ENCODE measurements at regions of chr12 and their contacts with region 1.

Region 1: DNA sequence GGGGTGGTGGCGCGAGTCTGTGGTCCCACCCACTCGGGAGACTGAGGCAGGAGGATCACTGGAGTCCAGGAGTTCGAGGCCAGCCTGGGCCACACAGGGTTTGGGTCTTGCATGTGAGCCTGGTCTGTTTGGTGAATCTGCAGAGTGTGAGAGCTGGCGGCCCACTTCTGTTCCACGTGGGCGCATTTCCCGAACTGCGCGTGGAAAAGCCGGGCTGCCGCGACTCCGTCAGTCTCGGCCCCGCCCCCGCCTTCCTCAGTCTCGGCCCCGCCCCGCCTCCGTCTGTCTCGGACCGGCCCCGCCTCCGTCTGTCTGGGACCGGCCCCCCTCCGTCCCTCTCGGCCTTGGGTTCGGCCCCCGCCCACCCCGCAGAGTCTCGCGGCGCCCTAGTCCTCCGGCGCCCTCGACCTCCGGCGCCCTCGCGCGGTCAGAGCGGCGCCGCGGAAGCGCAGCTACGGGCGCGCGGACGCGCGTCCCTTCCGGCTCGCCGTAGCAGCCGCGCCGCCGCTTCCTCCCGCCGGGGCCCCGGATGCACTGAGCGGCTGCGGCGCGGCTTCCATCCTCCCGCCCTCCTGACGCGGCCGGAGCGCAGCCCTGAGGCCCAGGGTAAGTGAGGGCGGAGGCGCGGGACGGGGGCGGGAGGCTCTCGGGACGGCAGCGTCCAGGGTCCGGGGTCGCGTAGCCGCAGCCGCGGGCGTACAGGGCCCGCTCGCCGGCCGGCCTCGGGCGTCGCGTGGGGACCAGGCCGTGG is at the start of gene EP400:
- DNase-seq: peak; percentile 93
- H3K4me3 ChIP-seq: peak within 1 kb of the TSS; percentile 82 to 87 (median 85)
- H3K27ac ChIP-seq: peak within 1 kb of the TSS; percentile 64
- H3K4me1 ChIP-seq: peaks cover 7% of the 10 kb centered on the region
- H3K27me3 ChIP-seq: no peaks in the 10 kb centered on the region
- CTCF ChIP-seq: peak; percentile 35 to 53
- total RNA-seq, gene EP400: 15.5 to 48.0 TPM

Region 2: DNA sequence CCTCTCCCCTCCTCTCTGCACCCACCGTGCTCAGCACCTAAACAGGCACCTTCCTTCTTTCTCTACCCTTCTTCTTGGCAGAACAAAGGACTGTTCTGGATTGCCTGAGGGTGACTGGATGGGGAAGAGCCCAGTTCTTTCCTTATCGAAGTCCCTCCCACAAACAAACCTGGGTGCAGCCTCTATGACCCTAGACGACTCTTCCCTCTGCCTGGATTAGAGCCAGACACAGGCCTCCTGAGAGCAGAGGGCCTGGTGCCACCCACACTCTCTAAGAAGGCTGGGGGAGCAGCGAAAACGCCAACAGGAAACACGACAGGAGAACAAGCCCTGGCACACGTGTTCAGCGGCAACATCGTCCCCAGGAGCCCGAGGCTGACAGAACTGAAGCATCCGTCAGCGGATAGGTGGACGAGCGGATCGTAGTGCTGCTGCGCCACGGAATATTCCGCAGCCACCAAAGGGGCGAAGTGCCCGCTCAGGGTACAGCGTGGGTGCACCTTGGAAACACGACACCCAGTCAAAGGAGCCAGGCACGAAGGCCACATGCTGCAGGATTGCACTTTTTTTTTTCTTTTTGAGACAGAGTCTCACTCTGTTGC is 1271.5 kb before region 1 on chr12:
- CTCF ChIA-PET with region 1: no interaction called
- dilution Hi-C with region 1: no loop called
- in situ Hi-C with region 1: no loop called
- intact Hi-C with region 1: no loop called
- DNase-seq: no peak
- H3K4me3 ChIP-seq: no peak overlapping the region
- H3K27ac ChIP-seq: no peak overlapping the region
- H3K4me1 ChIP-seq: no peaks in the 10 kb centered on the region
- H3K27me3 ChIP-seq: no peaks in the 10 kb centered on the region
- CTCF ChIP-seq: no peak

Region 3: GRCh38 chr12:130761537-130762318 is 1187.9 kb before region 1 on chr12:
- CTCF ChIA-PET with region 1: no interaction called
- dilution Hi-C with region 1: no loop called
- in situ Hi-C with region 1: no loop called
- intact Hi-C with region 1: loop called (anchors 5 kb)
- DNase-seq: peak; percentile 37
- H3K4me3 ChIP-seq: no peak overlapping the region
- H3K27ac ChIP-seq: no peak overlapping the region
- H3K4me1 ChIP-seq: no peaks in the 10 kb centered on the region
- H3K27me3 ChIP-seq: no peaks in the 10 kb centered on the region
- CTCF ChIP-seq: peak; percentile 46 to 80

Region 4: GRCh38 chr12:130916251-130916911 is 1033.2 kb before region 1 on chr12:
- CTCF ChIA-PET with region 1: no interaction called
- dilution Hi-C with region 1: no loop called
- in situ Hi-C with region 1: no loop called
- intact Hi-C with region 1: loop called (anchors 1 kb)
- DNase-seq: peak; percentile 21
- H3K4me3 ChIP-seq: no peak overlapping the region
- H3K27ac ChIP-seq: no peak overlapping the region
- H3K4me1 ChIP-seq: no peaks in the 10 kb centered on the region
- H3K27me3 ChIP-seq: no peaks in the 10 kb centered on the region
- CTCF ChIP-seq: peak; percentile 59 to 87

Region 5: GRCh38 chr12:131836193-131836592 is 113.4 kb before region 1 on chr12:
- CTCF ChIA-PET with region 1: no interaction called
- dilution Hi-C with region 1: no loop called
- in situ Hi-C with region 1: no loop called
- intact Hi-C with region 1: loop called (anchors 1 kb)
- DNase-seq: no peak
- H3K4me3 ChIP-seq: no peak overlapping the region
- H3K27ac ChIP-seq: no peak overlapping the region
- H3K4me1 ChIP-seq: peaks cover 19% of the 10 kb centered on the region
- H3K27me3 ChIP-seq: no peaks in the 10 kb centered on the region
- CTCF ChIP-seq: peak; percentile 14 to 51

Region 6: DNA sequence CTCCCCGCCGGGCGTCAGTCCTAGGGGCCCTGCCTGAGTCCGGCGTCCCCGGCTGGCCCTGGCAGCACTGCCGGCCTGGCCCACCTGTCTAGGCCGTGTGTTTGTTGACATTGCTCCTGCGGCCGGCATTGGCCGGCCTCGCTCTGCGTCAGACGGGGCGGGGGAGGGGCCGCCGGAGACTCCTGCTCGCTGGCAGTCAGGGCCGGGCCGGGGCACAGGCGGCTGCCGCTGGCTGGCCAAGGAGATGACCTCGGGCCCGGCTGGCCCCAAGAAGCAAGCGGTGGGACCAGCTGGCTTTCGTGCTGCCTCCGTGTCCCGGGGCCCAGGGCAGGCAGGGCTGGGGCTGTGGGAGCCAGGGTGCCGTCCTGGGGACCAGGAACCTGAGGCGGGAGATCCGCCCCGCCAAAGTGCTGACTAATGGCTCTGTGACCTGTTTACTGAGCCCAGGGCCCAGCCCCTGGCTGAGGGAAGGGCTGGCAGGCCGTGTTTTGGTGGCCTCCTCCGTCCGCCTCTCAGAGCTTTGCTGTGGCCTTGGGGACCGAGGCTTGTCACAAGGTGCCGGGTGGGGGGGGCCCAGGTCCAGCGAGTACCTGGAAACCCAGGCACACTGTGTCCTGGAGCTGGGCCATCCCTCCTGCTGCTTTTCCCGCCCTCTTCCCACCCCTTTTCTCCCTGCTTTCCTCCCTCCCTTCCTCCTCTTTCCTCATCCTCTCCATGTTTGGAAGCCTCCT is 53.4 kb before region 1 on chr12:
- CTCF ChIA-PET with region 1: no interaction called
- dilution Hi-C with region 1: no loop called
- in situ Hi-C with region 1: no loop called
- intact Hi-C with region 1: loop called (anchors 2 kb)
- DNase-seq: peak; percentile 87
- H3K4me3 ChIP-seq: peak overlapping the region; percentile 60 to 75 (median 63)
- H3K27ac ChIP-seq: peak overlapping the region; percentile 74
- H3K4me1 ChIP-seq: peaks cover 32% of the 10 kb centered on the region
- H3K27me3 ChIP-seq: no peaks in the 10 kb centered on the region
- CTCF ChIP-seq: no peak

Region 7: GRCh38 chr12:131928711-131929580 is 20.7 kb before region 1 on chr12 and contains the start of gene PUS1:
- CTCF ChIA-PET with region 1: no interaction called
- dilution Hi-C with region 1: no loop called
- in situ Hi-C with region 1: no loop called
- intact Hi-C with region 1: loop called (anchors 2 kb)
- DNase-seq: peak; percentile 91
- H3K4me3 ChIP-seq: peak within 1 kb of the TSS; percentile 98 to 99 (median 99)
- H3K27ac ChIP-seq: peak within 1 kb of the TSS; percentile 35
- H3K4me1 ChIP-seq: peaks cover 12% of the 10 kb centered on the region
- H3K27me3 ChIP-seq: no peaks in the 10 kb centered on the region
- CTCF ChIP-seq: no peak
- total RNA-seq, gene PUS1: 7.3 to 51.3 TPM

Measured in mammary epithelial cell (primary cell).